WTC11 (cell line): ENCODE measurements at regions of chr10 and their contacts with region 1.

Region 1: DNA sequence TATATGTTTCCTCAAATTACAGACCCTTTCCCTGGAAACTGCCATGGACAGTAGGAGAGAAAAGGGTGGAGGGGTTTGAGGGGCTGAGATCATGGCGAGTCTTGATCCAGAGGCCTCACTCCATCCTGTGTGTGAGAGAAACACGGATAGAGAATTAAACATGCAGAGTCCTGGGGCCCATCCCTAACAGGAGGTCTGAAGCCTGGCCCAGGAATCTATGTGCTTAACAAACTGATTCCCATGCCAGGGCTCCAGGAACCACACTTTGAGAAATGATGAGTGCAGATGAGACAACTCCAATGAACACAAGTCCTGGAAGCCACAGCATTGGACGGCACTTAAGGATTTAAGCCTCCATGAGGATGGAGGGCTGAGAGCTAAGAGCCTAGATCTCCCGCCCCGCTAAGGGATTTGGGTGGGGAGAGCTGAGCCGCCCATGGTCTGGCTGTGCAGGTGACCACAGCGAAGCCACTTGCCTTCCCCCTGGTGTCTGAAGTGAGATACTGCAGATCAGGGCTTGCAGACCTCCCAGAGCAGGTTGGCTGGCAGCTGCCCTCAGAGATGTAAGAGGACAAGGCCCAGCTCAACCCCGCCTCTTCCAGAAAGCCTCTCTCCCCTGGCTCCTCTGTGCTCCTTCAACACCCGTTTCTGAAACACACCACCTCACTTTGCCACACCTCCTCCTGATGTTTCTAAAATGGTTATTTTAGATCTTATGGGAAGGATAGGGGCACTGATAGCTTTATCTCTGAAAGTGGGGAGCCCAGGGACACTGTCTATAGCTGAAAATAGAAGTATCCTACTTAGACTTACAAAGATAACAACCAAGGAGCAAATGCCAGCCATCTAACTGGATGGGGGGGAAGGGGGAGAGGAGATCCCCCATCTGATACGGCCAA is 24.8 kb upstream of the EIF5AL1 start:
- DNase-seq: peak; percentile 86
- ATAC-seq: peak; percentile 97
- H3K4me3 Mint-ChIP-seq: no peak overlapping the region
- H3K27ac Mint-ChIP-seq: no peak overlapping the region
- H3K4me1 Mint-ChIP-seq: peaks cover 12% of the 10 kb centered on the region
- H3K27me3 Mint-ChIP-seq: no peaks in the 10 kb centered on the region; the same call in none of the 2 replicates
- CTCF ChIP-seq: peak; percentile 81

Region 2: GRCh38 chr10:79230328-79230830 is 257.2 kb before region 1 on chr10:
- CTCF ChIA-PET with region 1: no interaction called
- POLR2A ChIA-PET with region 1: no interaction called
- DNase-seq: peak; percentile 76
- ATAC-seq: peak; percentile 92
- H3K4me3 Mint-ChIP-seq: peak overlapping the region; percentile 25
- H3K27ac Mint-ChIP-seq: peak overlapping the region; percentile 93
- H3K4me1 Mint-ChIP-seq: peaks cover 35% of the 10 kb centered on the region
- H3K27me3 Mint-ChIP-seq: peaks cover 26% of the 10 kb centered on the region
- CTCF ChIP-seq: no peak

Region 3: GRCh38 chr10:79400146-79401004 is 87.2 kb before region 1 on chr10:
- CTCF ChIA-PET with region 1: interaction called, 16 read pairs
- POLR2A ChIA-PET with region 1: no interaction called
- DNase-seq: peak; percentile 71
- ATAC-seq: 0 out of 2 replicates have a peak, but pooled peaks have one; percentile 5
- H3K4me3 Mint-ChIP-seq: no peak overlapping the region
- H3K27ac Mint-ChIP-seq: no peak overlapping the region
- H3K4me1 Mint-ChIP-seq: peaks cover 44% of the 10 kb centered on the region
- H3K27me3 Mint-ChIP-seq: peaks cover 6% of the 10 kb centered on the region; the same call in 1 of the 2 replicates
- CTCF ChIP-seq: peak; percentile 84

Region 4: GRCh38 chr10:79445141-79445976 is 42.2 kb before region 1 on chr10 and contains the start of gene ZCCHC24:
- CTCF ChIA-PET with region 1: interaction called, 20 read pairs
- POLR2A ChIA-PET with region 1: interaction called, 4 read pairs
- DNase-seq: peak; percentile 98
- ATAC-seq: peak; percentile 95
- H3K4me3 Mint-ChIP-seq: peak within 1 kb of the TSS; percentile 86
- H3K27ac Mint-ChIP-seq: peak within 1 kb of the TSS; percentile 98
- H3K4me1 Mint-ChIP-seq: peaks cover 31% of the 10 kb centered on the region
- H3K27me3 Mint-ChIP-seq: peaks cover 44% of the 10 kb centered on the region
- CTCF ChIP-seq: no peak
- total RNA-seq, gene ZCCHC24: 6.0 to 7.7 TPM (median 6.2 TPM) in 3 replicates

Region 5: GRCh38 chr10:79475119-79475653 is 12.4 kb before region 1 on chr10:
- CTCF ChIA-PET with region 1: interaction called, 67 read pairs
- POLR2A ChIA-PET with region 1: no interaction called
- DNase-seq: no peak
- ATAC-seq: no peak
- H3K4me3 Mint-ChIP-seq: no peak overlapping the region
- H3K27ac Mint-ChIP-seq: no peak overlapping the region
- H3K4me1 Mint-ChIP-seq: no peaks in the 10 kb centered on the region
- H3K27me3 Mint-ChIP-seq: peaks cover 13% of the 10 kb centered on the region
- CTCF ChIP-seq: no peak

Region 6: GRCh38 chr10:79542626-79543025 is 55.1 kb after region 1 on chr10:
- CTCF ChIA-PET with region 1: no interaction called
- POLR2A ChIA-PET with region 1: no interaction called
- DNase-seq: no peak
- ATAC-seq: no peak
- H3K4me3 Mint-ChIP-seq: no peak overlapping the region
- H3K27ac Mint-ChIP-seq: no peak overlapping the region
- H3K4me1 Mint-ChIP-seq: no peaks in the 10 kb centered on the region
- H3K27me3 Mint-ChIP-seq: peaks cover 10% of the 10 kb centered on the region
- CTCF ChIP-seq: no peak

Region 7: DNA sequence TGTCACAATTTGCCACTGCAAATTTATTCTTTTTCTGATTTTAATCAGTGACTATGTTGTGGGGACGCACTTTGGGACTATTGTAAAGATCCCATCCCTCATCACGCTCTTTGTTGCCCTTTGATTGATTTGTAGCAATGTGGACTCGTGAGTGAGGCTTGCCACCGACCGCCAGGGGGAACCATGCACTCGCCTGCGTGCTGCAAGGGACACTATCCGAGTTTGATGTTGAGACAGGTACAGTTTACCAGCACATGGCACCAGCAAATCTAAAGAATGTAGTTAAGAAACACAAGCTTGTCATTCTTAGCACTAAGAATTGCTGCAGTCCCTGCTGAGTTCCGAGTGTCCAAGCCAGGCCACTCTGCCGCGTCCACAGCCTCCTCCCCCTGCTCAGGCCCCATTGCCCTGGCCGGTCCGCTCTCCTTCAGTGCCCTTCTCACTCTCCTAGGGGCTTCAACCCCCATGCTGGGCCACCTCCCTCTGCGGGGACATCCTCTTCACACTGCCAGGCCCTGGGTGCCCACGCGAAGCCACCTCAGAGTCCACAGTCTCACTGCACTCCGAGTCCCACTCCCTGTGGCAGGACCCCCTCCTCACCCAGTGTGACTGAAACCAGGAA is 74.7 kb after region 1 on chr10:
- CTCF ChIA-PET with region 1: no interaction called
- POLR2A ChIA-PET with region 1: no interaction called
- DNase-seq: peak; percentile 74
- ATAC-seq: peak; percentile 96
- H3K4me3 Mint-ChIP-seq: peak overlapping the region; percentile 50
- H3K27ac Mint-ChIP-seq: no peak overlapping the region
- H3K4me1 Mint-ChIP-seq: peaks cover 6% of the 10 kb centered on the region
- H3K27me3 Mint-ChIP-seq: peaks cover 10% of the 10 kb centered on the region
- CTCF ChIP-seq: peak; percentile 71

Region 8: GRCh38 chr10:79616164-79616563 is 128.6 kb after region 1 on chr10:
- CTCF ChIA-PET with region 1: no interaction called
- POLR2A ChIA-PET with region 1: no interaction called
- DNase-seq: no peak
- ATAC-seq: no peak
- H3K4me3 Mint-ChIP-seq: no peak overlapping the region
- H3K27ac Mint-ChIP-seq: no peak overlapping the region
- H3K4me1 Mint-ChIP-seq: peaks cover 9% of the 10 kb centered on the region
- H3K27me3 Mint-ChIP-seq: peaks cover 6% of the 10 kb centered on the region
- CTCF ChIP-seq: no peak